Ascending aorta (tissue), 2 donors: ENCODE measurements at regions of chr2 and their contacts with region 1.

Region 1: DNA sequence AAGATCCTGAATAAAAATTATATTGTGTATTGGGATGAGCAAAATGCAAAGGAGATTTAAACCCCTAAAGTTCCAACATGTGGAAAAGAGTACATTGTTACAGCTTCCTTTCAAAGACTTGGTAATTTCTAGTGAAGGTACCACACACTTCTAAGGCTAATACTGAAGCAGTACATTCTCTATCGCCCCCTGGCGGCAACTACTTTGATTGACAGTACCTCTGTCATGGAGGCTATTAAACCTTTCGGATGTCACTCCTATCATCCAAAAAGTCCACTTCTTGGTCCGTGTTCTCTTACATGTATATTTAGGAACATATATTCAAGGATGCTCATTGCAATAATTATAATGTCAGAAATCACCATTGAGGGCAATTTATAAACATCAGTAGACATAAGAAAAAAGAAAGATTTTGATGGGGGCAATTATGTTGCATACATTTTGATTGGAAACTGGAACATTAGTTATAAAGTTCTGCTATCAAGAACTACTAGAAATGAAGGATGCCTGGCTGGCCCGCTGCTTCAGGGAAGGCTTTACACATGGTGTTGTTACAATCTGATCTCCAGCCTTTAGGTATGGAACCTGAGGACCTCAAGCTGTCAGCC is 601.6 kb downstream of the CPS1 start:
- DNase-seq: peak in 1 of 2 donors; percentile 81
- H3K4me3 ChIP-seq: no peak overlapping the region
- H3K27ac ChIP-seq: no peak overlapping the region
- H3K4me1 ChIP-seq: no peaks in the 10 kb centered on the region
- H3K27me3 ChIP-seq: no peaks in the 10 kb centered on the region
- CTCF ChIP-seq: peak; percentile 43 to 74 (median 64)

Region 2: DNA sequence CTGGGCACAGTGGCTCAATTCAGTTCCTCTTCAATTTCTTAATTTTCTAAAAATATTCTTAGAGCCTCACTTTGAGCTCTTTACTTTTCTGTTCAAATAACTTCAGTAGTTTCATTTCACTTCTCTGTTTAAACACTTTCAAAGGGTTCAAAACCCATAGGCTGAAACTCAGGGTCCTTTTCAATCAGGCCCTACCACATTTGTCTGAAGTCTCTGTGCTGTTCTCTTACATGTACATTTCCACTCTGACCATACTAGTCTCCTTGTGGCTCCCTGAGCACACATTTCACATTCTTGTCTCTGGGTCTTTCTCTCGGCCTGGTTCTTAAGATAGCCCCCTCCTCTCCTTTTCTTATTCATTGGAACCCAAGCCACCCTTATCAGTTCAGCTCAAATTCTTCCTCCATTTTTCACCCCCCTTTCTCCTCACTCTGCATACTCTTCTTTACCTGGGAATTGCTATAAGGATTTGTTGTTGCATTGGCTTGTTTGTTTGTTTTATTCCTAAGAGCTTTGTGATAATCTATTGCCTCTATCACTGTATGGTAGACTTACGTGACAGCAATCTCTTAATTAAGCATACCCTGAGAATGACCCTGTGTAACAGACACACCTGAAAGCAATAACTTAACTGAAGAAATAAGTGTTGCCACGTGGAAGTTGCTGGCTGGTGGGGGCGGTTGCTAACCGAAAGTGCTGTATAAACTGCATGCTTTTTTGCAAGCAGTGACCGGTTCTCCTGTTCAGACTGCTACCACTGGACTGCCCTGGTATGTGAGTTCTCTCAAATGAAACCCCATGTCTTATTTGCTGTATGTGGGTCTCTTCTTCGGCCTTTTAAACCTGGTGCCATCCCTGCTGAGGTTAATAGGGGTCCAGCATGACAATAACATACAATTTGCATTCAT is 905.0 kb before region 1 on chr2:
- intact Hi-C with region 1: loop called (anchors 5 kb)
- DNase-seq: no peak
- H3K4me3 ChIP-seq: no peak overlapping the region
- H3K27ac ChIP-seq: no peak overlapping the region
- H3K4me1 ChIP-seq: no peaks in the 10 kb centered on the region
- H3K27me3 ChIP-seq: no peaks in the 10 kb centered on the region
- CTCF ChIP-seq: no peak

Region 3: DNA sequence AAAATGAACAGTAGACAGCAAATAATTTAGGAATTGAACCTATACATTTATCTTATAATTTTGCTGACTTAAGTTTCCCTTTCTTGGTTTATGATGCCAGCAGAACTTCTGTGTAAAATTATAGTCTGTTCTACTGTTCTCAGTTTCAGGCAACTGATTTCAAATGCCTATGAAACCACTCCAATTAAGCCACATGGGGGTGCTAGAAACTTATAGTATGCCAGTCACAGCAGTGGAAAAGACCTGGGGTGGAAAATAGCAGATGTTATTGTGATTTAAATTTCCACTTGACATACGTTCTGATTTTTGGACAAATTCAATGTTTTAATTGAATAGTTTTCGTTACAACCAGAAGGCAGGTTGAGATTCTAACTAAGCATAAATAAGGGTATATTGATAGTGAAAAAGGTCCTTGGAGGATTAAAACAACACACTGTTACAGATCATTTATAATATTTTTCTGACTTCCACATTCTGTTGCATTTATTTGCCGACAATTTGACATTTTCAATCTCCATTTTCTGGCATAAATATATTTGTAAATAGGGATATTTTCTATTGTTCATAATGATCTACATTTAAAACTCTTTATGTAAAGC is 540.1 kb before region 1 on chr2:
- intact Hi-C with region 1: loop called (anchors 5 kb)
- DNase-seq: no peak
- H3K4me3 ChIP-seq: no peak overlapping the region
- H3K27ac ChIP-seq: no peak overlapping the region
- H3K4me1 ChIP-seq: no peaks in the 10 kb centered on the region
- H3K27me3 ChIP-seq: no peaks in the 10 kb centered on the region
- CTCF ChIP-seq: peak; percentile 5 to 69 (median 38)

Region 4: GRCh38 chr2:211085056-211085680 is 72.8 kb before region 1 on chr2:
- intact Hi-C with region 1: loop called (anchors 5 kb)
- DNase-seq: no peak
- H3K4me3 ChIP-seq: no peak overlapping the region
- H3K27ac ChIP-seq: no peak overlapping the region
- H3K4me1 ChIP-seq: no peaks in the 10 kb centered on the region
- H3K27me3 ChIP-seq: no peaks in the 10 kb centered on the region
- CTCF ChIP-seq: peak in 1 of 3 experiments; percentile 61